Activated CD4-positive, alpha-beta T cell treated with anti-CD3 and anti-CD28 coated beads for 36 hours (primary cell): ENCODE measurements at regions of chr10 and their contacts with region 1.

Region 1: DNA sequence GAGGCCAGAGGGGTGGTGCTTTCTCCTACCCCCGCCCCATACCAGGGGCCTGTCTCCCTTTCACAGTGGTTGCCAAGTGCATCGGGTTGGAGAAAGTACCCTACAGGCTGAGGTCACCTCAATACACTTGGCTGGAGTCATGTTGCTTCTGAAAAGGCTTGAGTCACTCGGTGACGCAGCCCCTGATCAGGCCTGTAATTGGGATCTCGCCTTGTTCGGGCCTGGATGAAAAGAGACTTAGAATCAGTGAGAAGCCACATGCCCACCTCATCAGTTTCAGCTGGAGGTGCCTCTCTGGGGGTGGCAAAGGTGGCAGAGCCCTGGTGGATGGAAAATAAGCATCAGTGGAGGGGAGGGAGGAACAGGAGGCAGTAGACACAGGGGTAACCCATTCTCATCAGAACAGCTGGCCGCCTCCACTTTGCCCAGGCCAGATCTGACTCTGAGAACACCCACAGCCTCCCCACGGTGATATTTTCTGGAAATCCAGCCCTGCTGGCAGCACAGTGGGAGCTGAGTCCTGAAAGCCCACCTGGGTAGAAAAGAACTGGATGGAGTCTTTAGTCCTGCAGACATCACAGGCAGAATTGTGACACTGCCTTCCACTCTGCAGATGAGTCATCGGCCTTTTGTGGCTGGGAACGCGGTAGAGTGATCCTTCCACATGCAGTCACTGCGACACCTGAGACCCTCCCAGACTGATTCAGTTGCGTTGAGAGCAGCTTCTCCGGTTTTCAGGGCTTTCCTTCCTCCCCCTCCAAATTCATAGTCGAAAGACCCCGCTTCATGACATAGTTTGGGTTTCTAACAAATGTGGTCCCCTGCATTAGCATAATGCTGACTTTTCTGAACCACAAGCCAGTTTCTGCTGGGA is 108.0 kb downstream of the GRK5 start:
- DNase-seq: peak; percentile 90
- ATAC-seq: peak; percentile 83
- H3K4me3 Mint-ChIP-seq: peak overlapping the region; percentile 34
- H3K27ac Mint-ChIP-seq: peak overlapping the region; percentile 94
- H3K4me1 Mint-ChIP-seq: peaks cover 56% of the 10 kb centered on the region
- H3K27me3 Mint-ChIP-seq: peaks cover 2% of the 10 kb centered on the region

Region 2: DNA sequence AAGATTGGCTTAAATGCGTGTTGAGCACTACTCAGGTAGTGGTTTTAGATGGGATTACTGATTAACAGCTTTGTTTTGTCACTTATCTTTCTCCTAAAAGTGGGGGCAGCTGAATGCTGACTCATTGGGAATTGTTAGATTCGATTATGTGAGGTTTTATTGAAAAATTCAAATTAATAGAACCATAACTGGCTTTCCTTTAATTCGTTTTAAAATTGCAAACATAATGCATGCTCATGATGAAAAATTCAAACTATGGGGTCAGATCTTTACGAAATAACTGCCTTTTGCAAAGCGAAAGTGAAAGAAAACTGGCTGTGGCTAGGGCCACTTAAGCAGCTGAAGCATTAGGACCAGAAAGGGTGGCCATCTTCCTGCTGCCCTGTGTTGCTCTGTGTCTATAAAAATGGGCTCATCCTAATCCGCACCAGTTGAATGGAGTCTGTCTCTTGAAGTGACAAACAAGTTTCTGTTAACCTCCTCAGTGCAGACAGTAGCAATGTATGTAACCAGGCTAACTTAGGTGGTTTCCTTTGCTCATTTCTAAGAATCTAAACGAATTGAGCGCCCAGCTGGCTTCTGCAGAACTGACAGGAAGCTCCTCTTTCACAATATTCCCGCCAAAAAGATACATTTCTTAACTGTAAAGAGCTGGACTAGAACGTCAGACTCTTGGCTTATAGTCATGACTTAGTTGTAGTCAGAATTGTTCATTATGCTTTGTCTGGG is 183.7 kb before region 1 on chr10:
- CTCF ChIA-PET with region 1: no interaction called
- POLR2A ChIA-PET with region 1: no interaction called
- intact Hi-C with region 1: loop called (anchors 2 kb)
- DNase-seq: peak; percentile 75
- ATAC-seq: peak; percentile 84
- H3K4me3 Mint-ChIP-seq: peak overlapping the region; percentile 78
- H3K27ac Mint-ChIP-seq: peak overlapping the region; percentile 99
- H3K4me1 Mint-ChIP-seq: peaks cover 50% of the 10 kb centered on the region
- H3K27me3 Mint-ChIP-seq: no peaks in the 10 kb centered on the region

Region 3: DNA sequence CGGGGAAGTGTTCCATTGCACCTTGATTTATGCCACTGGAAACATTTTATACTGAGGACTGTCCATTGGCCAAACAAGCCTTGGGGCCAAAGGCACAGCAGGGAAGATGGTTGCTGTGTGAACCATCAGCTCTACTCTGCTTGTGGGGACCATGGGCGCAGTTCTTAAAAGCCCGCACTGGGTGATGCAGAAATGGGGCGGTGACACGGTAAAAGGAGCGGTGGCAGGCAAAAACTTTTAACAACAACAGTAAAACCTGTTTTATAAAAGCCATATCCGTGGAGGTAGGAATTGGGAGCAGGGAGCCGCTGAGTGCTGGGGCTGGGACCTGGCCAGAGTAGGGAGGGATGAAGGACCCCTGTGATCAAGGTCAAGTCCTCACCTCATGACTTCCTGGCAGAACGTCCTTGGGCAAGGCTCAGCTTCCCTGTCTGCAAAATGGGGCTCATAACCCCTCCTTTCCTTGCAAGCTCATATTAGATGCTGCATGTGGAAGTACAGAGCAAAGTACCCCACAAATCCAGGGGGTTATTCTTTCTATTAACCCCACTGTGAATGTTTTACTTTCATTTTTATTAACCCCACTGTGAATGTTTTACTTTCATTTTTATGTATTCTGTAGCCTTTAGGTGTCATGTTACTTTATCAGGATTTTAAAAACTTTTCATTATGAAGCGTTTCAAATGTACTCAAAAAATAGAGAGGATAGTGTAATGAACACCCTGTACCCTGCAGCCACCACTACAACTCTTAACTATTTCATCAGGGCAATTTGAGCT is 29.7 kb before region 1 on chr10:
- CTCF ChIA-PET with region 1: no interaction called
- POLR2A ChIA-PET with region 1: interaction called, 3 read pairs
- intact Hi-C with region 1: loop called in 1 of 2 experiments (anchors 1 kb)
- DNase-seq: no peak
- ATAC-seq: peak; percentile 47
- H3K4me3 Mint-ChIP-seq: peak overlapping the region; percentile 26
- H3K27ac Mint-ChIP-seq: peak overlapping the region; percentile 62
- H3K4me1 Mint-ChIP-seq: peaks cover 74% of the 10 kb centered on the region
- H3K27me3 Mint-ChIP-seq: no peaks in the 10 kb centered on the region

Region 4: DNA sequence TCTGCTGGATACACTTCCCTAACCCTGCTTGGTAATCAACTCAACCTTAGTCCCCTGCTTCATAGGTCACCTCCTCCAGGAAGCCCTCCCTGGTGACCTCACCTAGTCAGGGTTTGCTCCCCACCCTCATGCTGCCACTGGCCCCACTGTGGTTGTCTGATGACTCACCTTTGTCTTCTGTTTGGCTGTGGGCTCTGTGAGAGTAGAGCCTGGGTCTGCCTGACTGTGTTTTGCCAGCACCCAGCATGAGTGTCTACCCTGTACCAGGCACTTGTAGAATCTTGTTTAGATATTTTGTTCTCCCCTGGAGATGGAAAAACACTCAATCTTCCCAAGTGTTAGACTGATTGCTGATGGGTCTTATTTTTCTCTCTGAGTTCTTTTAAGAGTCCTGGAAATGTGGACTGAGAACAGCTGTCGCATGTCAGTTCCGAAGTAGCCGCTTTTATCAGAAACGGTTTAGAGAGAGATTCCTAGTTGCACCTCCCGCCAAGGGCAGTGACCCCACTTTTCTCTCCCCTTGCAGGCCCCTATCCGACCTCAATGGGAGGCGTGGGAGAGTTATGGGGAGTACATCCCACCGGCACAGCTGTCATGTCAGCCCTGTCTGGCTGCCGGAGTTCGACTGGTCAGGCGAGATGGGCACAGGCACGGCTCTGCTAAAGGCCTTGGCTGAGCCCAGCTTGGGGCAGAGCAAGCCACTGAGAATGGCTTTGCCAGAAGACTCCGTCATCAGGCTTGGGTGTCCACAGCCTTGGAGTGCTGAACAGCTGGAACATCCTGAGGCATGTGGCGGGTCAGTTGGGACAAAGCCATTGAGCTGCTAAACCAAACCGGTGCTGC is 26.3 kb after region 1 on chr10:
- CTCF ChIA-PET with region 1: no interaction called
- POLR2A ChIA-PET with region 1: no interaction called
- intact Hi-C with region 1: loop called in 1 of 2 experiments (anchors 2 kb)
- DNase-seq: peak; percentile 73
- ATAC-seq: peak; percentile 100
- H3K4me3 Mint-ChIP-seq: no peak overlapping the region
- H3K27ac Mint-ChIP-seq: no peak overlapping the region
- H3K4me1 Mint-ChIP-seq: peaks cover 27% of the 10 kb centered on the region
- H3K27me3 Mint-ChIP-seq: no peaks in the 10 kb centered on the region

Region 5: DNA sequence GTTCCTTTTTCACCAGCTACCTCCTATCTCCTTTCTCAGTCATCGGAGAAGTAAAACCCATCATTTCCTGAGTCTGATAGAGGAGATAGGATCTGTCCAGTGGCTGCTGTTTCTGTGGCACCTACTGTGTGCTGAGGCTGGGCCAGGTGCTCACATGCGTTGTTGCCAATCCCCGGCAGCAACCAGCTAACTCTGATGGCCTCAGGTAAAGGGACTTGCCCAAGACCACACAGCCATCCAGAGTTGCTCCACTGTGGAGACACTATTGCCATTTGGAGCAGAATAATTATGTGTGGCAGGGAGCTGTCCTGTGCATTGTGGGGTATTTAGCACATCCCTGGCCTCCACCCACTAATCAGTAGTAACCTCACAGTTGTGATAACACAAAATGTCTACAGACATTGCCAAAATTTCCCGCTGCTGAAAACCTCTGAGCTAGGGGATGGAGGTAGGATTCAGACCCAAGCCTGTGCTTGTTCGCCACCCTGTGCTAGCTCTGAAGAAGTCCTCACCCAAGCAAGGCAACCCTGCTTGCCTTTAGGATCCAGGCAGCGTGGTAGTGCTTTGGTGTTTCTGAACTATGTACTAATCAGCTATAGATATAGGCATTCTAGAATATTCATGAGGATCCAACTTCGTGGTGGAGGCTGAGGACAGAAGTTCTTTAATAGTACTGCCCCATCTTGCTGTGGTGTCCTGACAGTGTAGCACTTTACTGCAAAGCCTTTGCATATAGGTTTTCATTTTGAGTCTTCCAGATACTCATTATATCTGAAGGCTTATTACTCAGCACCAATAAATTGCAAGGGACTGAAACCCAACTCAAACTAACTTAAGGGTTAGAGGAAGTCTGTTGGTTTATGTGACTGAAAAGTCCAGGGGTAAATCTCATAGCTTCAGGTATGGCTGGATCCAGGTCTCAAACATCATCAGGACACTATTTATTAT is 56.6 kb after region 1 on chr10:
- CTCF ChIA-PET with region 1: no interaction called
- POLR2A ChIA-PET with region 1: no interaction called
- intact Hi-C with region 1: loop called in 1 of 2 experiments (anchors 2 kb)
- DNase-seq: peak; percentile 16
- ATAC-seq: peak; percentile 79
- H3K4me3 Mint-ChIP-seq: no peak overlapping the region
- H3K27ac Mint-ChIP-seq: no peak overlapping the region
- H3K4me1 Mint-ChIP-seq: peaks cover 32% of the 10 kb centered on the region
- H3K27me3 Mint-ChIP-seq: no peaks in the 10 kb centered on the region

Region 6: DNA sequence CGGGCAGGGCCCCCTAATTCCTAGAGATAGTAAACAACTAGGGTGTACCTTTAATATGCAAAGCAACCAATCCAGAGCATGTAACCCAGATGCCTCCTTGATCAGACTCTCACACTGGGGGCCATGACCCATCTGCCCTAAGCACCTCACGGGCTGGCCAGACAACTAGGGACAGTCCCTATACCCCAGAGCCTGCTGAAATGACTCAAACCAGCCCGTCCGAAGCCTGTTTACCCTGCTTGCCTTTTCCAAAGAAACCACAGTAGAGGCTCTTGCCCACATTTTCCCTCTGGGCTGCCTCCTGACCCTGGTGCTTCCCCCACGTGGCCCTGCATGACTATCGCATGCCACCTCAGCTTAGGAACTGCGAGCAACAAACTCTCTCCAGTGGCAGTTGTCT is 180.9 kb after region 1 on chr10:
- CTCF ChIA-PET with region 1: no interaction called
- POLR2A ChIA-PET with region 1: no interaction called
- intact Hi-C with region 1: loop called in 1 of 2 experiments (anchors 2 kb)
- DNase-seq: peak; percentile 83
- ATAC-seq: peak; percentile 74
- H3K4me3 Mint-ChIP-seq: no peak overlapping the region
- H3K27ac Mint-ChIP-seq: peak overlapping the region; percentile 75
- H3K4me1 Mint-ChIP-seq: peaks cover 86% of the 10 kb centered on the region
- H3K27me3 Mint-ChIP-seq: no peaks in the 10 kb centered on the region

Region 7: DNA sequence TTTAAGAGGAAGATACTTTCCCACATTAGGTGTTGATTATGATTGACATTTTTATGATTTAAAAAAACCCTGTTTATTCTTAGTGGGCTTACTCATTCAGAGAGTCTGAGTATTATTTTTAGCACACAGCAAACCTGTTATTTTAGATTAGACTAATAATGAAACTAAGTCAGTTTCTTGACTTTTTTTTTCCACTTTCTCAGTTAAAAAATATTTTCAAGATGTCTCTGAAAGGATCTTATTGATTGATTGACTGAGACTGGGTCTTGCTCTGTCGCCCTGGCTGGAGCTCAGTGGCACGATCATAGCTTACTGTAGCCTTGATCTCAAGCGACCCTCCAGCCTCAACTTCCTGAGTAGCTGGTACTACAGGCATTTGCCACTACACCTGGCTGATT is 390.1 kb after region 1 on chr10:
- CTCF ChIA-PET with region 1: no interaction called
- POLR2A ChIA-PET with region 1: no interaction called
- intact Hi-C with region 1: loop called in 1 of 2 experiments (anchors 2 kb)
- DNase-seq: peak; percentile 51
- ATAC-seq: peak; percentile 28
- H3K4me3 Mint-ChIP-seq: peak overlapping the region; percentile 41
- H3K27ac Mint-ChIP-seq: peak overlapping the region; percentile 96
- H3K4me1 Mint-ChIP-seq: peaks cover 82% of the 10 kb centered on the region
- H3K27me3 Mint-ChIP-seq: no peaks in the 10 kb centered on the region